GM12878 (cell line): ENCODE measurements at regions of chr5 and their contacts with region 1.

Region 1: GRCh38 chr5:17255471-17256021 is 38.1 kb downstream of the BASP1 start:
- DNase-seq: peak; percentile 51
- ATAC-seq: peak; percentile 67
- H3K4me3 ChIP-seq: no peak overlapping the region; the same call in 1 of the 2 replicates
- H3K27ac ChIP-seq: peak overlapping the region; percentile 50; the same call in 1 of the 2 replicates
- H3K4me1 ChIP-seq: peaks cover 26% of the 10 kb centered on the region
- H3K27me3 ChIP-seq: no peaks in the 10 kb centered on the region
- CTCF ChIP-seq: no peak
- EP300 ChIP-seq: peak in 1 of 2 experiments; percentile 50; a peak in 2 of 4 replicates
- POLR2A ChIP-seq: no peak
- RAD21 ChIP-seq: no peak

Region 2: DNA sequence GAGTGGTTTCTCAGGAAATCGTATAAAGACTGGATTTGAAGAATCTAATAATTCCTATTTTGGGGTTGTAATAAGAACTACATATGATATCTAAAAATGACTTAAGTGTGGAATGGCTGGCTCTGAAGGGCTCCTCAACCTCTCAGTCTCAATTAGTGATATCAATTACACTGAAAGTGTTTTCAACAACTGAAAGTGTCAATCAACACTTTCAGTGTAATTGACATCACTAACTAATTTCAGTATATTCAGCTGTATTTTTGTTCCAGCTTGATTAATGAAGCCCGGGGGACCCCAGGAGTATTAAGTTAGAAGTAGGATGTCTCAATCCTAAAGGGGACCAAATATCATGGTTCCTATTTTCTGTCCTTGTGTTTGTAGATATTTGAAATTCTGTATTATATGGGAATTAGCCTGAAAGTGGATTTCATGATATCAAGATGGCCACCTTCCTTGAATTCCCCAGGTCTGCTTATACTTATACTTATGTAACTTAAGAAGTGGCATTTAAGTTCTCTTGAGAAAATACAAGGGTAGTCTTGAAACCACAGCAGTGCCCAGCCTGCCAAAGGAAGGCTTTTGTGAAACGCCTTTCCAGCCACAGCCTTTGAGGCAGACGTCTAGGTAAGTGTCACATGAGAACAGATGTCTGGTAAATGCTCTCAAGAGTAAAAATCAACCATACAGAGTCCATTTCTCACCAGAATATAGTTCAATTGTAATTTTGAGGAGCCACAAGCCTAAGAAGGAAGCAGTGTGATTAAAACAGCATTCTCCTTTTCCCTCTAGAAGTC is 33.5 kb before region 1 on chr5:
- CTCF ChIA-PET with region 1: interaction called, 20 read pairs
- POLR2A ChIA-PET with region 1: interaction called, 19 read pairs
- RAD21 ChIA-PET with region 1: interaction called, 98 read pairs
- SMC1A ChIA-PET with region 1: interaction called, 150 read pairs
- in situ Hi-C with region 1: no loop called
- intact Hi-C with region 1: loop called (anchors 1 kb)
- DNase-seq: no peak
- ATAC-seq: peak; percentile 33
- H3K4me3 ChIP-seq: peak overlapping the region; percentile 17; the same call in 1 of the 2 replicates
- H3K27ac ChIP-seq: peak overlapping the region; percentile 40
- H3K4me1 ChIP-seq: peaks cover 30% of the 10 kb centered on the region; the same call in 1 of the 2 replicates
- H3K27me3 ChIP-seq: no peaks in the 10 kb centered on the region
- CTCF ChIP-seq: no peak
- EP300 ChIP-seq: no peak
- POLR2A ChIP-seq: no peak
- RAD21 ChIP-seq: no peak

Region 3: GRCh38 chr5:17228821-17229291 is 26.7 kb before region 1 on chr5:
- CTCF ChIA-PET with region 1: interaction called, 10 read pairs
- POLR2A ChIA-PET with region 1: interaction called, 19 read pairs
- RAD21 ChIA-PET with region 1: interaction called, 98 read pairs
- SMC1A ChIA-PET with region 1: interaction called, 150 read pairs
- in situ Hi-C with region 1: no loop called
- intact Hi-C with region 1: loop called (anchors 1 kb)
- DNase-seq: peak; percentile 66
- ATAC-seq: peak; percentile 64
- H3K4me3 ChIP-seq: peak overlapping the region; percentile 13; the same call in 1 of the 2 replicates
- H3K27ac ChIP-seq: peak overlapping the region; percentile 88
- H3K4me1 ChIP-seq: peaks cover 34% of the 10 kb centered on the region
- H3K27me3 ChIP-seq: no peaks in the 10 kb centered on the region
- CTCF ChIP-seq: no peak
- EP300 ChIP-seq: peak; percentile 24 to 35; a peak in 1 of 4 replicates
- POLR2A ChIP-seq: no peak
- RAD21 ChIP-seq: 0 out of 2 replicates have a peak, but pooled peaks have one; percentile 1

Region 4: DNA sequence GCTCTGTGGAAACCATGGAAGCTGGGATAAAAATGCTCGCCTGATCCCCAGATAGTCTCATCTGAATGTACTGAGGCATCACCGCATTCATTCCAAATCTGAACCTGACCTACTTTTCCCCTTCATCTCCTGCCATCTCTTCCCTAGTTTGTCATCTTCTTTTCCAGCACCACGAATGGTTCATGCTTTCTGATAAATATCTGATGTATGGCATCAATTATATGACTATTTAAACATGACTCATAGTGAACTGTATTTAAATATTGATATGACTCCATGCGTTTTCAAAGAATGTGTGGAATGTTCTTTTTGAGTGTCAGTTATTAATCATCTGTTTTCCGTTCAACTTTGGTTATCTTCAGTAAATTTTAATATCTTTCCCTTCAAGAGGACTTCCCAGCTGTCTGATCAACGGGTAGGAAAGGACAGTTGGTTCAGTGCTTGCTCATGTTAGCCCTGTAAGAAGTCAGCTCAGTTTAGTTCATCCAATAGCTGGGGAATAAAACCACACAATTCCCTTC is 17.0 kb before region 1 on chr5:
- CTCF ChIA-PET with region 1: interaction called, 7 read pairs
- POLR2A ChIA-PET with region 1: interaction called, 6 read pairs
- RAD21 ChIA-PET with region 1: interaction called, 3 read pairs
- SMC1A ChIA-PET with region 1: interaction called, 14 read pairs
- in situ Hi-C with region 1: no loop called
- intact Hi-C with region 1: no loop called
- DNase-seq: no peak
- ATAC-seq: no peak
- H3K4me3 ChIP-seq: no peak overlapping the region
- H3K27ac ChIP-seq: no peak overlapping the region
- H3K4me1 ChIP-seq: no peaks in the 10 kb centered on the region
- H3K27me3 ChIP-seq: no peaks in the 10 kb centered on the region
- CTCF ChIP-seq: no peak
- EP300 ChIP-seq: no peak
- POLR2A ChIP-seq: no peak
- RAD21 ChIP-seq: no peak

Region 5: GRCh38 chr5:17269201-17269600 is 13.7 kb after region 1 on chr5:
- CTCF ChIA-PET with region 1: interaction called, 7 read pairs
- POLR2A ChIA-PET with region 1: interaction called, 6 read pairs
- RAD21 ChIA-PET with region 1: interaction called, 7 read pairs
- SMC1A ChIA-PET with region 1: interaction called, 15 read pairs
- in situ Hi-C with region 1: no loop called
- intact Hi-C with region 1: no loop called
- DNase-seq: no peak
- ATAC-seq: peak; percentile 67
- H3K4me3 ChIP-seq: peak overlapping the region; percentile 49; the same call in 1 of the 2 replicates
- H3K27ac ChIP-seq: peak overlapping the region; percentile 45; the same call in 1 of the 2 replicates
- H3K4me1 ChIP-seq: 0 out of 2 replicates have a peak, but pooled peaks cover 2% of the 10 kb centered on the region
- H3K27me3 ChIP-seq: no peaks in the 10 kb centered on the region
- CTCF ChIP-seq: no peak
- EP300 ChIP-seq: no peak
- POLR2A ChIP-seq: no peak
- RAD21 ChIP-seq: no peak

Region 6: GRCh38 chr5:17282283-17283120 is 27.0 kb after region 1 on chr5:
- CTCF ChIA-PET with region 1: no interaction called
- POLR2A ChIA-PET with region 1: interaction called, 6 read pairs
- RAD21 ChIA-PET with region 1: interaction called, 12 read pairs
- SMC1A ChIA-PET with region 1: interaction called, 20 read pairs
- in situ Hi-C with region 1: no loop called
- intact Hi-C with region 1: no loop called
- DNase-seq: peak; percentile 91
- ATAC-seq: peak; percentile 95
- H3K4me3 ChIP-seq: peak overlapping the region; percentile 55
- H3K27ac ChIP-seq: peak overlapping the region; percentile 71
- H3K4me1 ChIP-seq: peaks cover 18% of the 10 kb centered on the region
- H3K27me3 ChIP-seq: no peaks in the 10 kb centered on the region
- CTCF ChIP-seq: no peak; a peak in 1 of 6 replicates
- EP300 ChIP-seq: peak; percentile 45 to 61; a peak in 3 of 4 replicates
- POLR2A ChIP-seq: no peak
- RAD21 ChIP-seq: no peak; the same call in 1 of the 2 replicates

Region 7: GRCh38 chr5:17295671-17296070 is 40.1 kb after region 1 on chr5:
- CTCF ChIA-PET with region 1: no interaction called
- POLR2A ChIA-PET with region 1: no interaction called
- RAD21 ChIA-PET with region 1: no interaction called
- SMC1A ChIA-PET with region 1: no interaction called
- in situ Hi-C with region 1: no loop called
- intact Hi-C with region 1: no loop called
- DNase-seq: no peak
- ATAC-seq: no peak
- H3K4me3 ChIP-seq: no peak overlapping the region
- H3K27ac ChIP-seq: no peak overlapping the region
- H3K4me1 ChIP-seq: no peaks in the 10 kb centered on the region
- H3K27me3 ChIP-seq: no peaks in the 10 kb centered on the region
- CTCF ChIP-seq: no peak
- EP300 ChIP-seq: no peak
- POLR2A ChIP-seq: no peak
- RAD21 ChIP-seq: no peak

Region 8: GRCh38 chr5:17316970-17317459 is 61.5 kb after region 1 on chr5:
- CTCF ChIA-PET with region 1: interaction called, 4 read pairs
- POLR2A ChIA-PET with region 1: interaction called, 5 read pairs
- RAD21 ChIA-PET with region 1: interaction called, 13 read pairs
- SMC1A ChIA-PET with region 1: interaction called, 9 read pairs
- in situ Hi-C with region 1: no loop called
- intact Hi-C with region 1: no loop called
- DNase-seq: peak; percentile 82
- ATAC-seq: peak; percentile 79
- H3K4me3 ChIP-seq: 0 out of 2 replicates have a peak overlapping the region, but pooled peaks have one; percentile 16
- H3K27ac ChIP-seq: peak overlapping the region; percentile 66
- H3K4me1 ChIP-seq: peaks cover 43% of the 10 kb centered on the region
- H3K27me3 ChIP-seq: no peaks in the 10 kb centered on the region
- CTCF ChIP-seq: no peak
- EP300 ChIP-seq: peak; percentile 95 to 98
- POLR2A ChIP-seq: no peak
- RAD21 ChIP-seq: no peak

Region 9: GRCh38 chr5:17511775-17512325 is 256.3 kb after region 1 on chr5:
- CTCF ChIA-PET with region 1: no interaction called
- POLR2A ChIA-PET with region 1: no interaction called
- RAD21 ChIA-PET with region 1: no interaction called
- SMC1A ChIA-PET with region 1: no interaction called
- in situ Hi-C with region 1: no loop called
- intact Hi-C with region 1: no loop called
- DNase-seq: no peak
- ATAC-seq: no peak
- H3K4me3 ChIP-seq: no peak overlapping the region
- H3K27ac ChIP-seq: no peak overlapping the region
- H3K4me1 ChIP-seq: no peaks in the 10 kb centered on the region
- H3K27me3 ChIP-seq: no peaks in the 10 kb centered on the region
- CTCF ChIP-seq: no peak
- EP300 ChIP-seq: no peak
- POLR2A ChIP-seq: no peak
- RAD21 ChIP-seq: no peak